Ascending aorta (tissue), 2 donors: ENCODE measurements at regions of chr20 and their contacts with region 1.

Region 1: DNA sequence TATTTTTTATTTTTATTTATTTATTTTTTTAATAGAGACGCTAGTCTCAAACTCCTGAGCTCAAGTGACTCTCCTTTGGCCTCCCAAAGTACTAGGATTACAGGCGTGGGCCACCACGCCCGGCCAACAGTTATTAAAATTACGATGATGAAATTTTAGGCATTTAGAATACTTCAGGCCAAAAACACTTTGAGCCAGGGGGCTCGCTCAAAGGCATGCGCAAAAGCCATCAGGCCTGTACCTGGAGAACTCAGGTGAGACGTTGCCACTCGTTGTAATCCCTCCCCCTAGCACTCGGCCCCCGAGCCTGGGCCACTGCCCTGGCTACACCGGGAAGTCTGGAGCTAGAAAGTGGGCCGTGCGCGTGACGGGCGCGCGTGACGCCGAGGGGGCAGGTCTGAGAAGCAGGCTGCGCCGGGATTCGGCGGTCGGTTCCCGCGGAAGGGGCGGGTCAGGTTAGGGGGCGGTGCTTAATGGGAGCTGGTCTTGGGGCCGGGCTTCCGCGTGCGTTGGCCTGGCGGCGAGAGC is 337 bp upstream of the CBFA2T2 start:
- DNase-seq: peak; percentile 95 to 100
- H3K4me3 ChIP-seq: peak overlapping the region; percentile 65 to 91
- H3K27ac ChIP-seq: peak overlapping the region; percentile 91 to 96
- H3K4me1 ChIP-seq: peaks cover 0 to 18% of the 10 kb centered on the region in 2 donors
- H3K27me3 ChIP-seq: no peaks in the 10 kb centered on the region
- CTCF ChIP-seq: no peak

Region 2: GRCh38 chr20:33401184-33401920 is 88.2 kb before region 1 on chr20 and contains the start of gene CDK5RAP1:
- intact Hi-C with region 1: loop called (anchors 5 kb)
- DNase-seq: peak; percentile 46 to 93
- H3K4me3 ChIP-seq: peak within 1 kb of the TSS; percentile 76 to 94
- H3K27ac ChIP-seq: peak within 1 kb of the TSS; percentile 56 to 61
- H3K4me1 ChIP-seq: peaks cover 6 to 17% of the 10 kb centered on the region in 2 donors
- H3K27me3 ChIP-seq: no peaks in the 10 kb centered on the region
- CTCF ChIP-seq: no peak
- total RNA-seq, gene CDK5RAP1: 42.8 TPM

Region 3: GRCh38 chr20:33423141-33423834 is 66.3 kb before region 1 on chr20:
- intact Hi-C with region 1: loop called (anchors 2 kb)
- DNase-seq: peak; percentile 75 to 95
- H3K4me3 ChIP-seq: no peak overlapping the region
- H3K27ac ChIP-seq: peak overlapping the region; percentile 89 to 91
- H3K4me1 ChIP-seq: peaks cover 11 to 32% of the 10 kb centered on the region in 2 donors
- H3K27me3 ChIP-seq: no peaks in the 10 kb centered on the region
- CTCF ChIP-seq: no peak

Region 4: DNA sequence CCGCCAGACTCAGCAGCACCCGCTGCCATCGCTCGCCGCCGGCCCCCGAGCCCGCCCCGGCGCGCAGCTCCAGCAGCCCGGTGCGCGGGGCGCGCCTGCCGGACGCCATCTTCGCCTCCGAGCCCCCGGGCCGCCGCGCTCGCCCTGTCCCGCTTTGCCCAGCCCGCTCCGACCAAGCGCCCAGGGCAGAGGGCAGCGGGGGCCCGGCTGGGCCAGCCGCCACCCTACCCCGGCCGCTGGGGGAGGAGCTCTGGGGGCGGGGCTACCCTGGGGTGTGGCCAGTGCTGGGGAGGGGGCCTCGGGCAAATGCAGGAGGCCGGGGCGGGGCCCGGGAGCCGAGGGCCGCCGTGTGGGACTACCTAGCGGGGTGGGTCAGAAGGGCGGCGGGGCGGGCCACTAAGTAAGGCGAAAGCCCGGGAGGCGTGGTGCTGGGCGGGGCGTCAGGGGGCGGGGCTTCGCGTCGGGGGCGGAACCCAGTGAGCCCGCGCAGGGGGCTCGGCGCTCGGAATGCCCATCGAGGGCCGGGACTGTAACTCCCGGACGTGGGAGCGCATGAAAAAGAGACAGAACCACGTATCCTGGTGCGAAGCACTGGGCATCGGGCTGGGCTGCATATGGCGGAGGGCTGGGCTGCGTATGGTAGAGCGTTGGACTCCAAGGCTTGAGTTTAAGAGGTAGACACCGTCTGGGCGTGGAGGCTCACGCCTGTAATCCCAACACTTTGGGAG is 45.9 kb before region 1 on chr20 and contains the start of gene SNTA1:
- intact Hi-C with region 1: loop called (anchors 5 kb)
- DNase-seq: peak; percentile 87 to 97
- H3K4me3 ChIP-seq: peak within 1 kb of the TSS; percentile 78 to 85
- H3K27ac ChIP-seq: peak within 1 kb of the TSS; percentile 85 to 91
- H3K4me1 ChIP-seq: peaks cover 9 to 23% of the 10 kb centered on the region in 2 donors
- H3K27me3 ChIP-seq: no peaks in the 10 kb centered on the region
- CTCF ChIP-seq: no peak
- total RNA-seq, gene SNTA1: 108 TPM

Region 5: GRCh38 chr20:33554914-33555420 is 65.4 kb after region 1 on chr20:
- intact Hi-C with region 1: loop called (anchors 5 kb)
- DNase-seq: no peak
- H3K4me3 ChIP-seq: peak overlapping the region in 1 of 2 donors; percentile 32
- H3K27ac ChIP-seq: peak overlapping the region; percentile 27 to 30
- H3K4me1 ChIP-seq: peaks cover 0 to 10% of the 10 kb centered on the region in 2 donors
- H3K27me3 ChIP-seq: no peaks in the 10 kb centered on the region
- CTCF ChIP-seq: no peak

Region 6: GRCh38 chr20:33647603-33648395 is 158.2 kb after region 1 on chr20:
- intact Hi-C with region 1: loop called (anchors 5 kb)
- DNase-seq: no peak
- H3K4me3 ChIP-seq: peak overlapping the region in 1 of 2 donors; percentile 49
- H3K27ac ChIP-seq: peak overlapping the region; percentile 25 to 68
- H3K4me1 ChIP-seq: peaks cover 4 to 17% of the 10 kb centered on the region in 2 donors
- H3K27me3 ChIP-seq: no peaks in the 10 kb centered on the region
- CTCF ChIP-seq: no peak

Region 7: DNA sequence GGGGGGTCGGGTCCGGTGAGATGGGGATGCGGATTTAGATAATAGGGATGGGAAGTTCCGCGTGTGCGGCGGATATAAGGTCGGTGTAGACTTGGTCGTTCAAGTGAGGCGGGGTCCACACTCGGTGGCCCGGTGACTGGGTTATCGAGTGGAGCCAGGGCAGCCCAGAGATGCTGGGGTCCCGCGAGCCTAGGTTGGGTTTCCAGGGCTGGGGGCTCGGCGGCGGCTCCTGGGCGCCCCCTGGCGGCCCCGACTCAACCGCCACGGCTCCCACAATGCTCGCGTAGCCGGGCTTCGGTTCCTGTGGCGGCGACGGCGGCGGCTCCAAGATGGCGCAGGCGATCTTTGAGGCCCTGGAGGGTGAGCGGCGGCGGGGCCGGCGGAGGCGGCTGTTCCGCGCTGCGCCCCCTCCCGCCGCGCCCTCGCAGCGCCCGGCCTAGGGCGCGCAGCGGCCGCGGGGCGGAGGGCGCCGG is 242.2 kb after region 1 on chr20 and contains the start of gene ZNF341:
- intact Hi-C with region 1: loop called (anchors 5 kb)
- DNase-seq: peak; percentile 29 to 92
- H3K4me3 ChIP-seq: peak within 1 kb of the TSS; percentile 73 to 81
- H3K27ac ChIP-seq: peak within 1 kb of the TSS; percentile 74 to 84
- H3K4me1 ChIP-seq: peaks cover 0 to 9% of the 10 kb centered on the region in 2 donors
- H3K27me3 ChIP-seq: no peaks in the 10 kb centered on the region
- CTCF ChIP-seq: peak; percentile 91
- total RNA-seq, gene ZNF341: 4.5 TPM